Naive thymus-derived CD4-positive, alpha-beta T cell (primary cell): ENCODE measurements at regions of chr9 and their contacts with region 1.

Region 1: GRCh38 chr9:133658442-133659431 is 22.6 kb downstream of the DBH start:
- DNase-seq: peak in 1 of 9 donors; percentile 12
- ATAC-seq: no peak
- H3K4me3 ChIP-seq: peak overlapping the region; percentile 17
- H3K4me3 Mint-ChIP-seq: peak overlapping the region in 9 of 10 donors; percentile 74 to 82 (median 76)
- H3K27ac ChIP-seq: no peak overlapping the region
- H3K27ac Mint-ChIP-seq: peak overlapping the region in 8 of 9 donors; percentile 36 to 91 (median 81)
- H3K4me1 ChIP-seq: peaks cover 0 to 42% of the 10 kb centered on the region in 2 donors
- H3K4me1 Mint-ChIP-seq: peaks cover 2 to 51% (median 43%) of the 10 kb centered on the region in 7 donors
- H3K27me3 ChIP-seq: no peaks in the 10 kb centered on the region
- H3K27me3 Mint-ChIP-seq: peaks cover 0 to 48% (median 0%) of the 10 kb centered on the region in 5 donors

Region 2: GRCh38 chr9:133406480-133407307 is 252.0 kb before region 1 on chr9:
- CTCF ChIA-PET with region 1: no interaction called
- POLR2A ChIA-PET with region 1: no interaction called
- intact Hi-C with region 1: no loop called
- DNase-seq: peak; percentile 59 to 78 (median 71)
- ATAC-seq: peak; percentile 94
- H3K4me3 ChIP-seq: no peak overlapping the region
- H3K4me3 Mint-ChIP-seq: no peak overlapping the region
- H3K27ac ChIP-seq: no peak overlapping the region
- H3K27ac Mint-ChIP-seq: peak overlapping the region in 7 of 9 donors; percentile 1 to 86 (median 51)
- H3K4me1 ChIP-seq: no peaks in the 10 kb centered on the region
- H3K4me1 Mint-ChIP-seq: peaks cover 2 to 14% (median 10%) of the 10 kb centered on the region in 7 donors
- H3K27me3 ChIP-seq: no peaks in the 10 kb centered on the region
- H3K27me3 Mint-ChIP-seq: no peaks in the 10 kb centered on the region

Region 3: DNA sequence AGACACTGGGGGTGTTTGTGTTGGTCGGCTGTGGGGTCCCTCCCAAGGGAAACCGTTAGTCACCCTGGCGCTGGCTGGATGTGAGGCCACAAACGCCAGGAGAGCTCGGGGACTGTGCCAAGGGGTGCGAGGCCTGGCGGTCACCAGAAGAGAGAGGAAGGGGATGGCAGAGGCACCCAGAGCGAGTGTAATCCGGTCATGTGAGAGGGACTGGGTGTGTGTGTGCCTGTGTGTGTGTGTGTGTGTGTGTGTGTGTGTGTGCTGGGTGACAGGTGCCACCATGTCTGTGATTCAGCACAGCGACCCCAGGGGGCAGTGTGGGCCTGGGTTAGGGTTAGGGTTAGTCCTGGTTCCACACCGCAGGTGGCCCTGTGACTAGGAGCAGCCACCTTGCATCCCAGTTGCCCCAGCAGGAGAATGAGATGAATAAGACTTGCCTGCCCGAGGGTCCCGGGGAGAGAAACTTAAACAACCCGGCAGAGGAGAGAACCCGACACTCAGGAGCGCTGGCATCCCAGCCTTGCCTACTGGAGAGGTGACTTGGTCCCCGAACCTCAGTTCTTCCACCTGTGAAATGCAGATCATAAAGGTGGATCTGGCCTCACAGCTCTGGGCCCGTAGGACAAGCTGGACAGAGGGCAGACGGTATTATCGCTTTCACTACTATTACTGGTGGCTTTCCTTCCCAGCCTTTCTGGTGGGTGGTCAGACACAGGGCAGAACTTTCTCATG is 125.6 kb before region 1 on chr9:
- CTCF ChIA-PET with region 1: no interaction called
- POLR2A ChIA-PET with region 1: no interaction called
- intact Hi-C with region 1: loop called in 1 of 2 experiments (anchors 1 kb)
- DNase-seq: peak; percentile 47 to 84 (median 77)
- ATAC-seq: peak; percentile 86
- H3K4me3 ChIP-seq: no peak overlapping the region
- H3K4me3 Mint-ChIP-seq: peak overlapping the region in 9 of 10 donors; percentile 57 to 82 (median 72)
- H3K27ac ChIP-seq: no peak overlapping the region
- H3K27ac Mint-ChIP-seq: peak overlapping the region in 8 of 9 donors; percentile 58 to 91 (median 80)
- H3K4me1 ChIP-seq: peaks cover 0 to 21% of the 10 kb centered on the region in 2 donors
- H3K4me1 Mint-ChIP-seq: peaks cover 6 to 24% (median 13%) of the 10 kb centered on the region in 7 donors
- H3K27me3 ChIP-seq: no peaks in the 10 kb centered on the region
- H3K27me3 Mint-ChIP-seq: peaks cover 0 to 18% (median 7%) of the 10 kb centered on the region in 5 donors

Region 4: DNA sequence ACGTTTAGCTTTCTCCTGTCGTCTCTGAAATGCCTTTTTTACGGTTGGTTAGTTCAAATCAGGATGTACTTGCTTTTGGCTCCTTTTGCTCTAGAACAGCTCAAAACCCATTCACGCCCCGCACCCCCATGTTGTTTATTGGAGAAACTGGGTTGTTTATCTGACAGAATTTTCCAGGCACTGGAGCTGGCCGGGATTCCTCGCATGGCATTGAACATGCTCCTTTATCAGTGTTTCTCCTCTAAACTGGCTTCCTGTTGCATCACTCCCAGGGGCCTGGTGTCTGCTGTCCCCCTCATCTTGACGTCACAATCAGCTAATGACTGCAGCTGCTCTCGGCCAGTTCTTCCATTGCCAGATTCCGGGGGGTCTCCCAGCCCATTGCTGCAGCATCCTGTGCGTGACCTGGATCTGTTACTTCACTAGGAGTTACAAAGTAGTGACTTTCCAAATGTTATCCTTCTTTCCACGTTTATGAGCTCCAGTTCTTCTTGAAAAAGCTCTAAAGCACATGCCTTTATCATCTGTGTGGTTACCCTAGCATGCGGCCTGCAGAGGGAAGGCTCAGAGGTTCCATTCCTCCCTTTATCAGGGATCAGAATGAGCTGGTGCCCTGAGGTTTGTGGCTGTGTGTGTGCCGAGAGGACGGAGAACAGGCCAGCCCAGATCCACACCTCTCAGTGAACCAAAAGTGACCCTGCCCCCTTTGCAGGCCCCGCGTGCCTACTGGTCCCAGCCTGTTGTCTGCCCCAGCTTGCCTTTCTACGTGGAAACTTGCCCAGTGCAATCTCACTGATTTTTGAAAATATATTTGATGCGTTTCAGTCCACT is 77.0 kb before region 1 on chr9:
- CTCF ChIA-PET with region 1: no interaction called
- POLR2A ChIA-PET with region 1: no interaction called
- intact Hi-C with region 1: no loop called
- DNase-seq: no peak
- ATAC-seq: no peak
- H3K4me3 ChIP-seq: no peak overlapping the region
- H3K4me3 Mint-ChIP-seq: peak overlapping the region in 1 of 10 donors; percentile 25
- H3K27ac ChIP-seq: no peak overlapping the region
- H3K27ac Mint-ChIP-seq: no peak overlapping the region
- H3K4me1 ChIP-seq: peaks cover 0 to 8% of the 10 kb centered on the region in 2 donors
- H3K4me1 Mint-ChIP-seq: peaks cover 0 to 13% (median 11%) of the 10 kb centered on the region in 7 donors
- H3K27me3 ChIP-seq: peaks cover 0 to 13% of the 10 kb centered on the region in 2 donors
- H3K27me3 Mint-ChIP-seq: peaks cover 36 to 60% (median 52%) of the 10 kb centered on the region in 5 donors

Region 5: GRCh38 chr9:133683586-133684120 is 24.9 kb after region 1 on chr9:
- CTCF ChIA-PET with region 1: interaction called, 10 read pairs
- POLR2A ChIA-PET with region 1: interaction called, 19 read pairs
- intact Hi-C with region 1: no loop called
- DNase-seq: peak; percentile 47 to 89 (median 83)
- ATAC-seq: peak; percentile 88
- H3K4me3 ChIP-seq: peak overlapping the region; percentile 28
- H3K4me3 Mint-ChIP-seq: peak overlapping the region; percentile 73 to 93 (median 88)
- H3K27ac ChIP-seq: peak overlapping the region; percentile 95
- H3K27ac Mint-ChIP-seq: peak overlapping the region; percentile 99 to 100 (median 99)
- H3K4me1 ChIP-seq: peaks cover 28 to 44% of the 10 kb centered on the region in 2 donors
- H3K4me1 Mint-ChIP-seq: peaks cover 13 to 60% (median 38%) of the 10 kb centered on the region in 7 donors
- H3K27me3 ChIP-seq: no peaks in the 10 kb centered on the region
- H3K27me3 Mint-ChIP-seq: no peaks in the 10 kb centered on the region

Region 6: GRCh38 chr9:133709015-133709611 is 50.4 kb after region 1 on chr9:
- CTCF ChIA-PET with region 1: interaction called, 8 read pairs
- POLR2A ChIA-PET with region 1: interaction called, 3 read pairs
- intact Hi-C with region 1: loop called (anchors 1 to 5 kb)
- DNase-seq: peak in 8 of 9 donors; percentile 41 to 89 (median 82)
- ATAC-seq: peak; percentile 97
- H3K4me3 ChIP-seq: no peak overlapping the region
- H3K4me3 Mint-ChIP-seq: peak overlapping the region in 9 of 10 donors; percentile 31 to 78 (median 58)
- H3K27ac ChIP-seq: peak overlapping the region; percentile 60
- H3K27ac Mint-ChIP-seq: peak overlapping the region in 8 of 9 donors; percentile 75 to 98 (median 86)
- H3K4me1 ChIP-seq: peaks cover 8 to 34% of the 10 kb centered on the region in 2 donors
- H3K4me1 Mint-ChIP-seq: peaks cover 5 to 46% (median 33%) of the 10 kb centered on the region in 7 donors
- H3K27me3 ChIP-seq: no peaks in the 10 kb centered on the region
- H3K27me3 Mint-ChIP-seq: peaks cover 0 to 7% (median 0%) of the 10 kb centered on the region in 5 donors

Region 7: GRCh38 chr9:133726401-133727276 is 67.9 kb after region 1 on chr9:
- CTCF ChIA-PET with region 1: interaction called, 17 read pairs
- POLR2A ChIA-PET with region 1: interaction called, 3 read pairs
- intact Hi-C with region 1: loop called (anchors 1 to 5 kb)
- DNase-seq: peak in 8 of 9 donors; percentile 46 to 69 (median 64)
- ATAC-seq: peak; percentile 74
- H3K4me3 ChIP-seq: no peak overlapping the region
- H3K4me3 Mint-ChIP-seq: no peak overlapping the region
- H3K27ac ChIP-seq: no peak overlapping the region
- H3K27ac Mint-ChIP-seq: peak overlapping the region in 2 of 9 donors; percentile 10 to 76
- H3K4me1 ChIP-seq: no peaks in the 10 kb centered on the region
- H3K4me1 Mint-ChIP-seq: peaks cover 0 to 9% (median 7%) of the 10 kb centered on the region in 7 donors
- H3K27me3 ChIP-seq: no peaks in the 10 kb centered on the region
- H3K27me3 Mint-ChIP-seq: peaks cover 0 to 14% (median 0%) of the 10 kb centered on the region in 5 donors